ENCODE measurements at regions of chr7 and their contacts with region 1.

Region 1: DNA sequence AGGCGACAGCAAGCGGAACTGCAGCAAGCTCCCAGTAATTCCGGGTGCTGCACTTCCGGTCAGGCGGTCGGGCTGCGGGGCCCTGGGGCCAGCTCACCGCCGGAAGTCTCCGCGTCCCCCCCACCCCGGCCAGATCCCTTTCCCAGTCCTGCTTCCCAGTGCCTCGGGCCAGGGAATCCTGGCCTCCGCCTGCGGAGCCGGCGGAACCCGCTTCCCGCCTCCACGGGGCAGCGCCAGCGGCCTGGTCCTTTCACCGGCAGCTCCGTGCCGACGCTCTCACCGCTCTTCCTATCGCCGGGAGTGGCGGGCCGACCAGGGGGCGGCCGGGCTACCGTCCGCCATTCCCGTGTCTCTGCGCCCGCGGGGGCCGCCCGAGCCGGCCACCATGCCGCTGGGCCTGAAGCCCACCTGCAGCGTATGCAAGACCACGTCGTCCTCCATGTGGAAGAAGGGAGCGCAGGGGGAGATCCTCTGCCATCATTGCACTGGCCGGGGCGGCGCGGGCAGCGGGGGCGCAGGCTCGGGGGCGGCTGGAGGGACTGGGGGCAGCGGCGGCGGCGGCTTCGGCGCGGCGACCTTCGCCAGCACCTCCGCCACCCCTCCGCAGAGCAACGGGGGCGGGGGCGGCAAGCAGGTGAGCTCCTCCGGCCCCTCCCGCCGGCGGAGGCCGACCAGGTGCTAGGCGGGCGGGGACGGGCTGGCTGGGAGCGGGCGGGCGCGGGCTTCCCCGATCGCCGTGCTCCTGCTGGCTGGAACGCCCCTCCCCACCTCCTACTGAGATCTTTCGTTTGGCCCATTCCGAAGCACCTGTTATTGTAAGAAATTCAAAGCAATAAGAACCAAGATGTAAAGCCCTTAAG is at the start of gene GATAD1:
- DNase-seq: peak; percentile 89
- H3K4me3 Mint-ChIP-seq: peak within 1 kb of the TSS; percentile 82
- H3K27ac Mint-ChIP-seq: peak within 1 kb of the TSS; percentile 84
- H3K4me1 Mint-ChIP-seq: peaks cover 12% of the 10 kb centered on the region
- H3K27me3 Mint-ChIP-seq: no peaks in the 10 kb centered on the region
- total RNA-seq, gene GATAD1: 27.5 to 29.6 TPM

Region 2: DNA sequence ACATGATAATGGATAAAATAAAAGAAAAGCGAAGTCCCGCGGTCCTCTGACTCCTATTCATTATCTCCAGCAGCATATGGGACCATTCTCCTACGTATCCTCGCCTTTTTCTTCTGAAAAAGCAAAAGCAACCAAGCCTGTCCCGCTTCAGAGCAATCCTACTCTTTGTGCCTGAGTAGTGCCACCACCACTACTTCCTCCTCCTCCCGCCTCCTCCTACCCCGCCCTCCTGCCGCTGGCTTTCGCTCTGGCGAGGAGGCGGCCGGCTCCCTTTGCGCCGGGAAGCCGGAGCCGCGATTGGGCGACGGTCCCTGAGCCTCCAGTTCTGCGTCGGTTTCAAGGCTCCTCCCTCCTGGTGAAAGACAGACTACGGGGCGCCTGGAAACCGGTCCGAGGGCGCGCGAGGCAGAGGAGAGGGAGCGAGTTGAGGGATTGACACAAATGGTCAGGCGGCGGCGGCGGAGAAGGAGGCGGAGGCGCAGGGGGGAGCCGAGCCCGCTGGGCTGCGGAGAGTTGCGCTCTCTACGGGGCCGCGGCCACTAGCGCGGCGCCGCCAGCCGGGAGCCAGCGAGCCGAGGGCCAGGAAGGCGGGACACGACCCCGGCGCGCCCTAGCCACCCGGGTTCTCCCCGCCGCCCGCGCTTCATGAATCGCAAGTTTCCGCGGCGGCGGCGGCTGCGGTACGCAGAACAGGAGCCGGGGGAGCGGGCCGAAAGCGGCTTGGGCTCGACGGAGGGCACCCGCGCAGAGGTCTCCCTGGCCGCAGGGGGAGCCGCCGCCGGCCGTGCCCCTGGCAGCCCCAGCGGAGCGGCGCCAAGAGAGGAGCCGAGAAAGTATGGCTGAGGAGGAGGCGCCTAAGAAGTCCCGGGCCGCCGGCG is 1183.3 kb before region 1 on chr7 and contains the start of gene FZD1:
- CTCF ChIA-PET with region 1: no interaction called
- intact Hi-C with region 1: loop called (anchors 10 kb)
- DNase-seq: peak; percentile 85
- H3K4me3 Mint-ChIP-seq: peak within 1 kb of the TSS; percentile 82
- H3K27ac Mint-ChIP-seq: no peak within 1 kb of the TSS
- H3K4me1 Mint-ChIP-seq: peaks cover 8% of the 10 kb centered on the region
- H3K27me3 Mint-ChIP-seq: peaks cover 53% of the 10 kb centered on the region
- total RNA-seq, gene FZD1: 0.29 to 0.30 TPM

Region 3: GRCh38 chr7:91940572-91941341 is 506.8 kb before region 1 on chr7 and contains the start of gene AKAP9:
- CTCF ChIA-PET with region 1: interaction called, 5 read pairs
- intact Hi-C with region 1: loop called (anchors 1 kb)
- DNase-seq: peak; percentile 91
- H3K4me3 Mint-ChIP-seq: peak within 1 kb of the TSS; percentile 90
- H3K27ac Mint-ChIP-seq: peak within 1 kb of the TSS; percentile 94
- H3K4me1 Mint-ChIP-seq: peaks cover 29% of the 10 kb centered on the region
- H3K27me3 Mint-ChIP-seq: no peaks in the 10 kb centered on the region
- total RNA-seq, gene AKAP9: 20.0 to 26.2 TPM

Region 4: DNA sequence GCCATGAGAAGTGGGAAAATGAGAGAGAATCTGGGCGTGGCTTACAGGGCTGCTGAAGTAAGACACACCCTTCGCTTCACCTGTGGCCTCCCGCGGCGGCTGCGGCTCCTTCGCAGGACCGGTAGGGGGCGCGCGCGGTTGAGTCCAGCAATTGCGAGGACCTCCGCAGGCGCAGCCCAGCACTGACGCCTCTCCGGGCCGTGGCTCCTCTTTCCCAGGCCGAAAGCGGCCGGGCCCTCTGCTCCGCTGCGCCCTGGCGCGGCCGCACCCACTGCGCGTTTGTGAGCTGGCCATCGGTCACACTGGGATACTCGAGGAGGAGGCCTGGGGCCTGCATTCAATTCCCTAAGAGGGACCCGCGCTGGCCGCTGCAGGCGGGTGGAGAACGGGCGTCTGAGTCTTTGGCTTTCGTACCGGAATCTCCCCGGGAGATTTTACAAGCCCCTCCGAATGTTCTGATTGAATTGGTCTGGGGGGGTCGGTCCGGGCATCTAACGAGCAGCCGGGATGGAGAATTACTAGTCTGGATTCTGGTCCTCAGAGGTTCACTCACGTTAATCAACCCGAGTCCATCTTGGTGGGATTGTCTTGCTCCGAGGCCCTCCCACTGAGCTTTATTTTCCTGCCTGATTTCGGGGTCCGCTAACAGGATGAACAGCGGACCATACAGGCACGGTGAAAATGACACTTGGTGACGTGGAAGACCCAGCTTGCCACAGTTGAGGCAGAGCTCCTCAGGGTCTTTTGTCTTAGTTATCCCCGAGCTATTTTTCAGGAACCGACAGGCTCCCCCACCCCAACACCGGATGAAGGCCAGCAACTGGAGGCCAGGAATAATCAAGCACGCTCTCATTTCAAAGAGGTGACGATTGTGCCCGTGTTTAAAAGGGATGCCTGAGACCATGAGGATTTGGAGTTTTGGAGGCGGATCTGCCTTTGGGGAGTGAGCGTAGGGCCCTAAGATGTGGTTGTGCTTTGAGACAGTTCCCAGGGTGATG is 268.3 kb before region 1 on chr7 and contains the start of gene LRRD1:
- CTCF ChIA-PET with region 1: interaction called, 7 read pairs
- intact Hi-C with region 1: loop called (anchors 1 kb)
- DNase-seq: peak; percentile 94
- H3K4me3 Mint-ChIP-seq: peak within 1 kb of the TSS; percentile 72
- H3K27ac Mint-ChIP-seq: no peak within 1 kb of the TSS
- H3K4me1 Mint-ChIP-seq: peaks cover 10% of the 10 kb centered on the region
- H3K27me3 Mint-ChIP-seq: peaks cover 3% of the 10 kb centered on the region
- total RNA-seq, gene LRRD1: not detected

Region 5: GRCh38 chr7:92461027-92462003 is 13.7 kb after region 1 on chr7:
- CTCF ChIA-PET with region 1: interaction called, 43 read pairs
- intact Hi-C with region 1: no loop called
- DNase-seq: peak; percentile 53
- H3K4me3 Mint-ChIP-seq: no peak overlapping the region
- H3K27ac Mint-ChIP-seq: no peak overlapping the region
- H3K4me1 Mint-ChIP-seq: no peaks in the 10 kb centered on the region
- H3K27me3 Mint-ChIP-seq: no peaks in the 10 kb centered on the region